ENCODE measurements at regions of chr10 and their contacts with region 1.

Region 1: DNA sequence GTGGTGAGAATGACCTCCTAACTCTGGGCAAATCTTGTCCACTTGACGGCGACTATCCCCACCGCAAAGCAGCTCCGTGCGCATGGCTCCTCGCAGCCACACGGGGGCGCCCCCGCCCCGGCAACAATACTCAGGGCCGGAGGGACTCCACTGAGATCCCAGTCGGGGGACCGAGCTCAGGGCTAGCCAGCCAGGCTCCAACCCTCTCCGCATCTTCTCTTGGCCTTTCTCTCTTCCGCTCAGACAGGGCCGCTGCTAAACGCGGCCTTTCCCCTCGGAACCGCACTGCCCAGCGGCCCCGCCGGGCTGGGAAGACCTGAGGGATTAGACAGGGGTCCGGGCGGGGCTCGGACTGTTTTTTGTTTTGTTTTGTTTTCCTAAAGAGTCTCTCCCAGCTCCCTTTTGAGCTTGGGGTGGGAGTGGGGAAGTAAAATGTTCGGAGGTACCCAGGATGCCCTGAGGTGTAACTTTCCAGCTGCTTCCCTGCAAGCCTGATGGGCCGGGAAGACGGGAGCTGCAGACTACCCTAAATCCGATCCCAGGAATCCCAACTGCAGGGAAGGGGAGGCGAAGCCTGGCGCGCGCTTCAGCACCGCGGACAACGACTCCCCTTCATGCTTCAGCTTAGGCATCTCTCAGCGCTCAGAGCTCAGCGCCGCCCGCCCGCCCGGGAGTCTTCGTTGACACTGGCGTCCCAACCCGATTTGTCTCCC is 2.7 kb downstream of the KCNIP2 start:
- DNase-seq: peak; percentile 89
- CTCF ChIP-seq: peak; percentile 97

Region 2: DNA sequence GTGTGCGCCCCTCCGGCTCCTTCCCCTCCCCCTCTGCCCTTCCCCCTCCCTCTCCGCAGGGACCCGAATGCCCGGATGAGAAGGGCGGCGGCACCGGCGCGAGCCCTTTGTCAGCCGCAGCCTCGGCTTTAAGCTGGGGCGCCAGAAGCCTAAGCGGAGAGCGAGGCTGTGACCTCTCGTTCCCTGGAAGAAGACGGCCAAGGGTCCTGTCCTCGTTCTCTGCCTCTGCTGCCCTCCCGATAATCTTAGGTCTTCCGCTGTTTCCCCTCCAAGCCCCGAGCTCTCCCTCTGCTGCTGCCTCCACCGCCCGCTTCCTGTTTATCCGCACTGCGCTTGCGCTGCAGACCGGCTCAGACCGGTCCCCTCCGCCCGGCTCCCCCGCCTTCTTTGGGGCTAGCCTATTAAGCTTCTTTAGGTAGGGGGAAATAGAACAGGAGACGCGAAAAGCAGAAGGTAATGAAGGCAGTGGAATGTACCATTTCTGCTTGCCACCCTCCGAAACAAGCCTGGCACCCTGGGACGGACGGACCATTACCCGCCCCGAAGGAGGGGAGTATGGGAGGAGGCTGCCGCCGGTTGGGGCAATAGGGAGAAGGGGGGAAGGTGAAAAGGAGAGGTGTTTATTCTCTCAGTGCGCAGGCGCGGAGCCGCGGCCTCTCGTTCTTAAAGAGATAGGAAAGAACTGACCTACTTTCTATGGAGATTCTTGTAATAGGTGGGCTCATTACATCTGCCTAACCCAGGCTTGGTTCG is 22.6 kb before region 1 on chr10 and contains the start of gene OGA:
- CTCF ChIA-PET with region 1: interaction called, 66 read pairs
- POLR2A ChIA-PET with region 1: interaction called, 5 read pairs
- DNase-seq: peak; percentile 94
- CTCF ChIP-seq: no peak

Region 3: DNA sequence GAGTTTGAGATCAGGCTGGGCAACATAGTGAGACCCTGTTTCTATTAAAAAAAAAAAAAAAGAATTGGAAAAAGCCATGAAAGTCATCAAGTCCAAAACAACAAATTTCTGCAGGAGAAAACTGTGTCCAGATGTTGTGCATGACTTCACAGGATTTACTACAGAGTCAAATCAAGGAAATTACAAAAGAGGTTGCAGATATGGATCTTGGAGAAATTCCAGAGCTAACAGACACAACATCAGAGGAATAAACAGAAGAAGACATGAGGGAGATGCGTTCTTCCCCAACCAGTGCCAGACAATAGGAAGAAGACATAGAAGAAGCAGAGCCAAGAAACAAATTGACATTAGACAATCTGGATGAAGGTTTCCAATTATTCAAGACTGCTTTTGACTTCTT is 27.0 kb after region 1 on chr10:
- CTCF ChIA-PET with region 1: interaction called, 10 read pairs
- POLR2A ChIA-PET with region 1: no interaction called
- DNase-seq: no peak
- CTCF ChIP-seq: no peak

Region 4: GRCh38 chr10:101897633-101898032 is 56.7 kb after region 1 on chr10:
- CTCF ChIA-PET with region 1: interaction called, 122 read pairs
- POLR2A ChIA-PET with region 1: no interaction called
- DNase-seq: no peak
- CTCF ChIP-seq: no peak

Region 5: DNA sequence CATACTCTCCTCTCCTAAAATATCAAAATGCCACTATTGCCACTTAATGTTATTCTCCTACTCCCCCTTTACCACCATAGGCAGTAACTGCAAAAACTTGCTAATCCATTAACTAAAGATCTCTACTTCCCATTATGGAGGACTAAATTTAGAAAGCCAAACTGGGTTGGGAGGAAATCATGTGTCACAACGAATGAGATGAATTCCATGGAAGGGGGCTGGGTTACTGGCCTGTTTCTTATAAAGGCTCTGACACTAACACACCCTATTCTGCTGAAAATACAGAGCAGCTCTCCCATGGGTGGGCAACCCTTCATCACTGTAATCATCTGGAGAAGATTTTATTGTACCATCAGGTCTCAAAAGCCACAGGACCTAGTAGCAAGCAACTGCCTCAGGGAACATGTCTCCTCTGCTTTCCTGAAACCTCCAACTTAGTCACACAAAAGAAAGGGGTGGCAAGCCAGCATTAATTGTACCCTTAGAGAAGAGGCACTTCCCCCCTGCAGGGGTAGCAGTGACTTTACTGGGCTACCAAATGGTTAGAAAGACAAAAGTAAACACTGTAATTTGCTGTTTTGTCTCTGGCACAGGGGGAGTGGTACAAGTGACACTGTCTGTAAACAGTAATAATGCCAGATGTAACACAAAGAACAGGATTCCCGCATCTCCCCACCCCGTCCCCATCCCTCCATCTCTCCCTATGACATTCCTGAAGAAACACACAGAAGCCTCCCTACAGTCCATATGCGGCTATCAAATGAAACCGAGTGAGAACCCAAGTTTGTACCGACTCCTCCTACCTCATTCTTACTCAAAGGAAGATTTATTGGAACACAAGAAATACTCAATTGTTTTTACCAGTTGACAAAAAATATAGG is 133.4 kb after region 1 on chr10:
- CTCF ChIA-PET with region 1: interaction called, 17 read pairs
- POLR2A ChIA-PET with region 1: no interaction called
- DNase-seq: no peak
- CTCF ChIP-seq: no peak

Region 6: GRCh38 chr10:102024799-102025198 is 183.9 kb after region 1 on chr10:
- CTCF ChIA-PET with region 1: interaction called, 831 read pairs
- POLR2A ChIA-PET with region 1: interaction called, 6 read pairs
- DNase-seq: no peak
- CTCF ChIP-seq: no peak

Region 7: GRCh38 chr10:102085336-102085735 is 244.4 kb after region 1 on chr10:
- CTCF ChIA-PET with region 1: interaction called, 15 read pairs
- POLR2A ChIA-PET with region 1: no interaction called
- DNase-seq: no peak
- CTCF ChIP-seq: no peak

Region 8: GRCh38 chr10:102268375-102268888 is 427.5 kb after region 1 on chr10:
- CTCF ChIA-PET with region 1: no interaction called
- POLR2A ChIA-PET with region 1: no interaction called
- DNase-seq: no peak
- CTCF ChIP-seq: no peak